Ovary (tissue), 10 donors: ENCODE measurements at regions of chr10 and their contacts with region 1.

Region 1: DNA sequence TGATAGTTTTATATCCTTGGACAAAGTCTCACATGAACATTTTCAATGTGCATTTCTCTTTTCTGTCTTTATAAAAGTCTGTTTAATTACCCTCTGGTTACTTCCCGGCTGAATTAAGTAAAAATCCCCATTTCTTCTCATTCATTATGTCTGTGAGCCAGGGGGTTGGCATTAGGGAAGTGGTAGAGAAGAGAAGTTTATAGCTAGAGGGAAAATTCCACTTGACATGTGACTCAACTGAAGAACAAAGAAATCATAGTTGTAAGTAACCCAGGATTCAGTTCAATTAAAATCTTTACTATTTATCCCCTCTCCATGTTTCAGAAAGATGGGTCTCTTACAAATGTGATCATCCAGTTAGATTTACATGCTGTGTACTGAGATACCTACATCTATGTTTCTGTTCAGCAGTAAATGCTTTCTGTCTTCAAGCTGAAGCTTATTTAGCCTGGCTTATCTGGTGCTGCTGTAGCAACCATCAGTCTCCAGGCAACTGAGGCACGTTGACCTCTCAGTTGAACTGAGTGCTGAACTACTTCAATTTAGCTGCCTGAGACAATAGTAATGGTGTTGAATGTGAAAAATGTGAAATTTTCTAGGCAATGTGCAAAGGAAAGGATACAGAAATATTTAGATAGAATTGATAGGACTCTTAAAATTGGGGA is 181.6 kb downstream of the MLLT10 start:
- DNase-seq: no peak
- H3K4me3 ChIP-seq: no peak overlapping the region
- H3K27ac ChIP-seq: no peak overlapping the region
- H3K4me1 ChIP-seq: no peaks in the 10 kb centered on the region
- H3K27me3 ChIP-seq: no peaks in the 10 kb centered on the region
- CTCF ChIP-seq: no peak
- EP300 ChIP-seq: no peak
- POLR2A ChIP-seq: no peak

Region 2: GRCh38 chr10:21556527-21556926 is 159.1 kb before region 1 on chr10:
- intact Hi-C with region 1: loop called in 1 of 4 experiments (anchors 10 kb)
- DNase-seq: no peak
- H3K4me3 ChIP-seq: no peak overlapping the region
- H3K27ac ChIP-seq: no peak overlapping the region
- H3K4me1 ChIP-seq: peaks cover 3% of the 10 kb centered on the region
- H3K27me3 ChIP-seq: no peaks in the 10 kb centered on the region
- CTCF ChIP-seq: no peak
- EP300 ChIP-seq: no peak
- POLR2A ChIP-seq: no peak

Region 3: GRCh38 chr10:21993360-21994001 is 277.8 kb after region 1 on chr10:
- intact Hi-C with region 1: no loop called
- DNase-seq: no peak
- H3K4me3 ChIP-seq: no peak overlapping the region
- H3K27ac ChIP-seq: no peak overlapping the region
- H3K4me1 ChIP-seq: no peaks in the 10 kb centered on the region
- H3K27me3 ChIP-seq: no peaks in the 10 kb centered on the region
- CTCF ChIP-seq: peak in 2 of 3 donors; percentile 6 to 46
- EP300 ChIP-seq: no peak
- POLR2A ChIP-seq: no peak